ENCODE measurements at regions of chr5 and their contacts with region 1.

Region 1: GRCh38 chr5:148730943-148731861 is 76.9 kb upstream of the HTR4 start:
- DNase-seq: no peak
- H3K4me3 ChIP-seq: peak overlapping the region in 1 of 4 donors; percentile 34
- H3K27ac ChIP-seq: peak overlapping the region in 2 of 4 donors; percentile 10 to 22
- H3K4me1 ChIP-seq: peaks cover 0 to 23% (median 11%) of the 10 kb centered on the region in 3 donors
- H3K27me3 ChIP-seq: no peaks in the 10 kb centered on the region
- CTCF ChIP-seq: peak; percentile 66 to 89 (median 88)
- POLR2A ChIP-seq: no peak

Region 2: GRCh38 chr5:148297731-148298130 is 433.5 kb before region 1 on chr5:
- intact Hi-C with region 1: no loop called
- DNase-seq: no peak
- H3K4me3 ChIP-seq: no peak overlapping the region
- H3K27ac ChIP-seq: no peak overlapping the region
- H3K4me1 ChIP-seq: no peaks in the 10 kb centered on the region
- H3K27me3 ChIP-seq: no peaks in the 10 kb centered on the region
- CTCF ChIP-seq: no peak
- POLR2A ChIP-seq: no peak

Region 3: DNA sequence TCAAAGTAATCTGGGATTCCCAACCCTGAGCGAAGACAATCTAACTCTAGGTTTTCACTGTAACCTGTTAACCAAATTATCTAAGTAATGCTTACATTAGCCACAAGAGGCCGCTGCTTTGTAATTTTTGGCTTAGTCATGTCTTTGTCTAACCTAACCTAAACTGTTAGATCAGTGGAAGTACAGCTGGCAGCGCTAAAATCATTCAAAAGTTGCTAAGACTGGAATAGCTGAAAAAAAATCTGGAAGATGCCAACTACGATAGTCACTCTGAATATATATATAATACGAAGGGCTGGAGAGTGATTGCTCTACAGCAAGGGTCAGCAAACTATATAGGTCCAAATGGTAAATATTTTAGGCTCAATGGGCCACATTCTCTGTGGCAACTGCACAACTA is 287.2 kb before region 1 on chr5:
- intact Hi-C with region 1: loop called (anchors 2 kb)
- DNase-seq: no peak
- H3K4me3 ChIP-seq: no peak overlapping the region
- H3K27ac ChIP-seq: no peak overlapping the region
- H3K4me1 ChIP-seq: no peaks in the 10 kb centered on the region
- H3K27me3 ChIP-seq: no peaks in the 10 kb centered on the region
- CTCF ChIP-seq: peak; percentile 28 to 83 (median 74)
- POLR2A ChIP-seq: no peak

Region 4: DNA sequence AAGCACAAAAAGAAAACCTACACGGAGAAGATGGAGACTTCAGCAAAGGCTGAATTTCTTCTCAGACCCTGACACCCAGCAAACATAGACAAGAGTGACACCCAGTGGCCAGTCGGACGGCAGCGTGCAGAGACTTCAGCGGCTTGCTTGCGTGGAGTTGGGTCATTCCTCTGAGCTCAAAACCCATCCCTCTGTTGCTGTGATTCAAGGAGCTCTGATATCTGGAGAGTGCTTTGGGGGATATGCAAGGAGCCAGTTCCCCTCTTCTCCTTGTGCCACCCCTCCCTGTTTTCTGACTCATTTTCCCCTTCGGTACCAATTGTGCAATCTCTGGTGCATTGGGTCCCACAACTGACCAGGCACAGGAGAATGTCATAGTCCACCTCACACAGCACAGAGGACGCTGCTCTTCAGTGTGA is 304.2 kb after region 1 on chr5:
- intact Hi-C with region 1: loop called (anchors 10 kb)
- DNase-seq: peak; percentile 1
- H3K4me3 ChIP-seq: no peak overlapping the region
- H3K27ac ChIP-seq: no peak overlapping the region
- H3K4me1 ChIP-seq: peaks cover 0 to 19% (median 5%) of the 10 kb centered on the region in 3 donors
- H3K27me3 ChIP-seq: no peaks in the 10 kb centered on the region
- CTCF ChIP-seq: peak; percentile 70 to 86 (median 82)
- POLR2A ChIP-seq: no peak